ENCODE measurements at regions of chr18 and their contacts with region 1.

Region 1: GRCh38 chr18:79528846-79529245 is 133.1 kb downstream of the NFATC1 start:
- DNase-seq: peak; percentile 62 to 86 (median 72)
- ATAC-seq: peak; percentile 49
- H3K4me3 ChIP-seq: no peak overlapping the region
- H3K4me3 Mint-ChIP-seq: peak overlapping the region; percentile 3
- H3K27ac ChIP-seq: no peak overlapping the region
- H3K27ac Mint-ChIP-seq: peak overlapping the region; percentile 57
- H3K4me1 ChIP-seq: peaks cover 26% of the 10 kb centered on the region
- H3K4me1 Mint-ChIP-seq: peaks cover 39% of the 10 kb centered on the region
- H3K27me3 ChIP-seq: peaks cover 0 to 5% of the 10 kb centered on the region in 2 experiments
- H3K27me3 Mint-ChIP-seq: no peaks in the 10 kb centered on the region
- CTCF ChIP-seq: peak; percentile 95

Region 2: DNA sequence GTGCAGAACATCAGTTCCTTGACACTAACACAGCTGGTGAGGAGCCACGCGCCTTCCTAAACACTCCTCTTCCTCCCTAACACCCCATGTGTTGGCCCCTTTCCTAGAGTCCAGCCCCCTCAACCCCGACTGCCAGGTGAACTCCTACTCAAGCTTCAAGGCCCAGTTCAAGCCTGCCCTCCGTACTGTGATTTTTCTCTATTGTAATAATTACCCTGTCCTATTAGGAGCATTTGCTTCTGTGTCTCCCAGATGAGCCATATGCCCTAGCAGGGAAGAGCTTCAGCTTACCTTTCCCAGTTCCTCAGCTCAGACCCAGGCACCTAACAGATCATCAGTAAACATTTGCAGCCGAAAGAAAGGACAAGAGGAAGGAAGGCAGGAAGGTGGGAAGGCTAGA is 679.8 kb before region 1 on chr18:
- CTCF ChIA-PET with region 1: no interaction called
- POLR2A ChIA-PET with region 1: no interaction called
- intact Hi-C with region 1: no loop called
- DNase-seq: no peak
- ATAC-seq: no peak
- H3K4me3 ChIP-seq: no peak overlapping the region
- H3K4me3 Mint-ChIP-seq: no peak overlapping the region
- H3K27ac ChIP-seq: no peak overlapping the region
- H3K27ac Mint-ChIP-seq: no peak overlapping the region
- H3K4me1 ChIP-seq: no peaks in the 10 kb centered on the region
- H3K4me1 Mint-ChIP-seq: no peaks in the 10 kb centered on the region
- H3K27me3 ChIP-seq: peaks cover 0 to 2% of the 10 kb centered on the region in 2 experiments
- H3K27me3 Mint-ChIP-seq: peaks cover 24% of the 10 kb centered on the region
- CTCF ChIP-seq: no peak

Region 3: DNA sequence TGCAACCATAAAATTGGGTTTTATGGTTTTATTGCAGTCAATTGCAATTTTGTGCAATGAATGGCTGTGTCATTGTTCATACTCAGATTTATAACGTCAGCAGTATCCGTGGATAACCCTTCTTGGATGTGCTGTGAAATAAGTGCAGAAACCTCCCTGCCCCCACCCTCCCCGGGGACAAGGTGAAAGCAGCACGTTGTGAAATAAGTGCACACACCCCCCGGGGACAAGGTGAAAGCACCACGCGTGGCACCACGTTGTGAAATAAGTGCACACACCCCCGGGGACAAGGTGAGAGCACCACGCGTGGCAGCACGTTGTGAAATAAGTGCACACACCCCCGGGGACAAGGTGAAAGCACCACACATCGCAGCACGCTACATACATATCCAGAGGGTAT is 226.7 kb before region 1 on chr18:
- CTCF ChIA-PET with region 1: no interaction called
- POLR2A ChIA-PET with region 1: no interaction called
- intact Hi-C with region 1: no loop called
- DNase-seq: no peak
- ATAC-seq: no peak
- H3K4me3 ChIP-seq: no peak overlapping the region
- H3K4me3 Mint-ChIP-seq: no peak overlapping the region
- H3K27ac ChIP-seq: no peak overlapping the region
- H3K27ac Mint-ChIP-seq: no peak overlapping the region
- H3K4me1 ChIP-seq: no peaks in the 10 kb centered on the region
- H3K4me1 Mint-ChIP-seq: no peaks in the 10 kb centered on the region
- H3K27me3 ChIP-seq: no peaks in the 10 kb centered on the region
- H3K27me3 Mint-ChIP-seq: no peaks in the 10 kb centered on the region
- CTCF ChIP-seq: no peak

Region 4: GRCh38 chr18:79458131-79458838 is 70.6 kb before region 1 on chr18:
- CTCF ChIA-PET with region 1: no interaction called
- POLR2A ChIA-PET with region 1: no interaction called
- intact Hi-C with region 1: loop called in 1 of 2 experiments (anchors 5 kb)
- DNase-seq: no peak
- ATAC-seq: no peak
- H3K4me3 ChIP-seq: no peak overlapping the region
- H3K4me3 Mint-ChIP-seq: no peak overlapping the region
- H3K27ac ChIP-seq: no peak overlapping the region
- H3K27ac Mint-ChIP-seq: peak overlapping the region; percentile 36
- H3K4me1 ChIP-seq: no peaks in the 10 kb centered on the region
- H3K4me1 Mint-ChIP-seq: peaks cover 4% of the 10 kb centered on the region
- H3K27me3 ChIP-seq: no peaks in the 10 kb centered on the region
- H3K27me3 Mint-ChIP-seq: no peaks in the 10 kb centered on the region
- CTCF ChIP-seq: no peak

Region 5: GRCh38 chr18:79546781-79547272 is 18.0 kb after region 1 on chr18:
- CTCF ChIA-PET with region 1: no interaction called
- POLR2A ChIA-PET with region 1: no interaction called
- intact Hi-C with region 1: no loop called
- DNase-seq: no peak
- ATAC-seq: no peak
- H3K4me3 ChIP-seq: no peak overlapping the region
- H3K4me3 Mint-ChIP-seq: no peak overlapping the region
- H3K27ac ChIP-seq: no peak overlapping the region
- H3K27ac Mint-ChIP-seq: no peak overlapping the region
- H3K4me1 ChIP-seq: no peaks in the 10 kb centered on the region
- H3K4me1 Mint-ChIP-seq: no peaks in the 10 kb centered on the region
- H3K27me3 ChIP-seq: peaks cover 0 to 3% of the 10 kb centered on the region in 2 experiments
- H3K27me3 Mint-ChIP-seq: no peaks in the 10 kb centered on the region
- CTCF ChIP-seq: no peak

Region 6: DNA sequence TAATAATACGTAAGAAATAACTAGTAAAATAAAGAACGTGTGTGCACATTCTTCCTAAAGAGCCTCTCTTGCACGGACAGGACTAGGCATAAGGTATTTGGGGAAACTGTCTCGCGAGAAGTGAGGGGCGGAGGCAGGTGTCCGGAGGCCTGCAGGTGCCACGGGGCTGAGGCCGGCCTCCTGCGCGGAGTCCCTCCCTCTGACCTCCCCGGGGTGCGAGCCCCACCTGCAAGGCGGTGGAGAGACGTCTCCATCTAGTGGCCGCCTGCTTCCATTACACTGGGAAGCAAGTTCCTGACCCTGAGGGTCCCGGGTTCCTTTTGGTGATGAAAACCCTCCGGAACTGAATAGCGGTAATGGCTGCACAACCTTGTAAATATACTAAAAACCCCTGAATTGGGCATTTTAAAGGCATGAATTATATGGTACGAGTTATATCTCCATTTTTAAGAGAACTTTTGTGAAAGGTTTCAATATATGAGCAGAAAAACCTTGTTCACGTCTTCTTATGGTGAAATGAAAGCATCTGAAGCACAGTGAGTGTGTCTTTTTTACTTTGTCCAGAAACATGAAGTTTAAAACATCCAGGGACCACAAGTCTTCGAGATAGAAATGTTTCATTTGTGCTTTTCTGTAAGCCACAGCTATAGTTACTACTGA is 115.3 kb after region 1 on chr18:
- CTCF ChIA-PET with region 1: no interaction called
- POLR2A ChIA-PET with region 1: no interaction called
- intact Hi-C with region 1: loop called (anchors 2 kb)
- DNase-seq: peak; percentile 44 to 80 (median 57)
- ATAC-seq: peak; percentile 80
- H3K4me3 ChIP-seq: no peak overlapping the region
- H3K4me3 Mint-ChIP-seq: no peak overlapping the region
- H3K27ac ChIP-seq: no peak overlapping the region
- H3K27ac Mint-ChIP-seq: no peak overlapping the region
- H3K4me1 ChIP-seq: peaks cover 18% of the 10 kb centered on the region
- H3K4me1 Mint-ChIP-seq: peaks cover 8% of the 10 kb centered on the region
- H3K27me3 ChIP-seq: peaks cover 0 to 6% of the 10 kb centered on the region in 2 experiments
- H3K27me3 Mint-ChIP-seq: peaks cover 18% of the 10 kb centered on the region
- CTCF ChIP-seq: peak; percentile 99